Right ventricle myocardium inferior (tissue), 1 donor: ENCODE measurements at regions of chr2 and their contacts with region 1.

Region 1: DNA sequence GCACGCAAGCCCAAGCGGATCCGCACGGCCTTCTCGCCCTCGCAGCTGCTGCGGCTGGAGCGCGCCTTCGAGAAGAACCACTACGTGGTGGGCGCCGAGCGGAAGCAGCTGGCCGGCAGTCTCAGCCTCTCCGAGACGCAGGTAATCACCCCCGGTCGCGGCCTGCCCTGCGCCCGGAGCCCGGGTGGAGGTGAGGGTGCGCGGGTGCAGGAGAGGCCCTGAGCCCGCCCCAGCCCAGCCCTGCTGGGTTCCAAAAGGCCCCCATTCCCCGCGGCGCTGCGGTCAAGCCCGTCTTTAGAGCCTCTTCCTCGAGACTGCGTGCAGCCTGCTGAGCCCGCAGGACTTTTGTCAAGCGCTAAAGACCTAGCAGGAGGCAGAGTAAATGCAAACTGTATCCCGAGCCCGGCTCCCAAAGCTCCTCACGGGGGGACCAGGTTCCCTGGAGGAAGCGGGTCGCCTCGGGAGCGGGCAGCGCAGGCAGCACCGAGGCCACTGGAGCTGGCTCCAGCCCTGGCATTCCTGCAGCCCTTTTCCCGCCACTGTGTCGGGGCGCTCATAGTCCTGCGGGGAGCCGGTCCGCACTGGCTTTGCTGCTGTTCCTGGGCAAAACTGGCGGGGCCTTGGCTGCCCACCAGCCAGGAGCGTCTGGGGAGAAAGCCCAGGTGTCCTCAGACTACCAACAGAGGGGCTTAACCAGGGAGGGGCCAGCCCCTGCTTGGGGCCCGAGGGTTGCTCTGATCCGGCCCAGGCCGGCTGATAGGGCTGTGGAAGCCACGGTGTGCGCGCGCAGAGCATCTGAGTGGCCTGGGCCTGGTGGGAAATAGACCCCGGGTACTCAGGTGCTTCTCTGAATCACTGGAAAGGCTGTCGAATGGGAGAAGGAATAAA is 7.3 kb downstream of the EMX1 start:
- DNase-seq: no peak
- ATAC-seq: no peak

Region 2: DNA sequence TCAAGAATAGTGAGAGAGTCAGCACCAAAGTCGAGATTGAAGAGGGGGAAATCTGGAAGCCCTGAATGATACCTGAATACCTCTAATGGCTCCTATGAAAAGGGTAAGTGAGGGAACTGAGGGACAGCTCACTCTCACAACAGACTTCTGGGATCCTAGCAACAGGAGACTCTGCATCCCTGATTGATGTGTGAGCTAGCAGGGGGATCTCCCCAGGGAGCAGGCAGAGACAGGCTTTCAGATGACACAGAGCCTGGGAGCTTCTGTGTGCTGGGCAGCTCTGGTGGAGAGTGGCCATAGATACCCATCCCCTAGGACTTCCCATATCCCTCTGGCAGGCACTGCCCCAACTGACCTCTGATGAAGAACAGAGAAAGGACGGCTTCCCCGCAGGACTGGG is 305.0 kb before region 1 on chr2:
- intact Hi-C with region 1: no loop called
- DNase-seq: no peak
- ATAC-seq: no peak

Region 3: GRCh38 chr2:72731116-72731515 is 193.5 kb before region 1 on chr2:
- intact Hi-C with region 1: no loop called
- DNase-seq: no peak
- ATAC-seq: no peak

Region 4: DNA sequence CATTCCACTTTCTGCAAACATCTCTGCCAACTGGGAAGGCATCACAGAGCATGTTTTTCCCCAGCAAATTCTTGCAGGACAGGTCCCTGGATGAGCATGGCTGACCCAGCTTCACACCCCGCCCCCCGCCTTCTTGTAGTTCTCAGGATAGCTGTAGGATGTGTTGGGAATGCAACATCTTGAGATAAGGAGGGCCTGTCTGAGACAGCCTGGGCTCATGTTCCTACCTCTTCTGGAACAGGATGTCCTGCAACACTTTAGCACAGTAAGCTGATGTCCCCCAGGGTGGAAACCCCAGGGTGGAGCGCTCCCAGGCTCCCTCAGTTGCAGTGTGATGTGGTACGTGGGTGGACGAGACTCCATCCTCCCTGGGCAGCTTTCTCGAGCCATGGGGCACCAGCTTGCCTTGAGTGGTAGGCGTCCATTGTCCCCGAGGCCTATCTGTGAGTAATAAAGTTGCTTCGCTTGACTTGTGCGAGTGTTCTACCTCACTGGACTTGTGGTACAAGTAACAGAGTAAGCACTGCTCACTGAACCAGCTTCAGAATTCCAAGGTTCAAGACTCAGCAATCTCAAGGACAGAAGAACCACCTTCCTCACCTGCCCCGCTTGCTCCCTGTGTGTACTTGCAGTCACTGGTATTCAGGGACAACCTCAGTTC is 41.3 kb after region 1 on chr2:
- intact Hi-C with region 1: loop called (anchors 2 kb)
- DNase-seq: peak; percentile 6
- ATAC-seq: no peak